BJ (cell line): ENCODE measurements at regions of chr11 and their contacts with region 1.

Region 1: DNA sequence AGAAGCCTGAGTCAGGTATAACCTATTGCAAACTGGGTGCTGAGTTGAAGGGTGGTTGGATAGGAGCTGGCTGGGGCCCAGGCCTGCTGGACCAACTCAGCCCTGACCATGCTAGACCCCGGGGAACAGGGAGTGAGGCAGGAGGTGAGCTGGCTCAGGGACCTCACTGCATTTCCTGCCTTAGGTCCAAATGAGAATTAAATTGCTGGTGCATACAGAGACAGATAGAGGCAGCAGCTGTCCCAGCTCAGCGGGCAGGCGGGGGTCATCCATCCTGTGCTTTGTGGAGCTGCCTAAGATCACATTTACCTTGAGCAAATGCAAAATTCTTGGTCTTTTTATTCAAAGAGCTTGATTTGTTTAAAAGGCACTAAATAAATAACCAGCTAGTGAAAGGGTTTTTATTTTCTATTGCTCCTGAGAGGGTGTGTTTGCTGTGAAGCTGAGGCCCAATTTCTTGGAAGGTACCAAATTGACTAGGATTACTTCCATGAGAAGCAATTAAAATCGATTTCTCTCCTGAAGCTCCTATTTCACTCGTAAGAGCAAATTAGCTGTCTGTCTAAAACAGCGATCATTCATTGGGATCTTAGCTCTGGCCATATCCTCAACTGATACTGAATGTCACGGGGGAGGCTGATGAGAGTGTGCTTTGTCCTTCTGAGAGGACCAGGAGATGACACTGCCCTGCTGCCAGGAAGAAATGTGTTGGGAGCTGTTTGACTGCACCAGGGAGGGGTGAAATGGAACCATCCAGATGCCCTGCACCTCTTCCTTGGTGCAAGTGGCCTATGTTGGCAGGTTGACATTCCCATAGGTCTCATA is 24.9 kb downstream of the USH1C start:
- DNase-seq: no peak
- H3K4me3 ChIP-seq: no peak overlapping the region
- H3K27me3 ChIP-seq: peaks cover 7% of the 10 kb centered on the region
- CTCF ChIP-seq: no peak

Region 2: GRCh38 chr11:17504330-17505107 is 14.8 kb before region 1 on chr11:
- CTCF ChIA-PET with region 1: interaction called, 36 read pairs
- POLR2A ChIA-PET with region 1: no interaction called
- DNase-seq: no peak
- H3K4me3 ChIP-seq: no peak overlapping the region
- H3K27me3 ChIP-seq: peaks cover 5% of the 10 kb centered on the region
- CTCF ChIP-seq: peak; percentile 91